ENCODE measurements at regions of chr6 and their contacts with region 1.

Region 1: DNA sequence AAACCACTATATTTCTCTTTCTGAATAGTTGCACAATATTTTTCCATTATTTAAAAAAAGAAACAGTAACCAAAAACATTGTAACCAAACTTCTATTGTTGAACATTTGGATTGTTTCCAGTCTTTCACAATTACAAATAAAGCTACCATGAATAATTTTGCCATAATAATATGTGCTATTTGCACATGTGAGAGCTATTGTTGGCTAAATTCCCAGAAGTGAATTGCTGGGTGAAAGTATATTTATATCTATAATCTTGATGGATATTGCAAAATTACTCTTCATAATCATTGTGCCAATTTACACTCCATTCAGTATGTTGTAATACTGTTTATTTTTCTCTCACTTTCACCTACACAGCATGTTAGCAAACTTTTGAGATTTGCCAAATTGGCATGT is 36.6 kb upstream of the SLC22A16 start:
- DNase-seq: peak in 1 of 2 experiments; percentile 79
- H3K4me3 ChIP-seq: no peak overlapping the region
- H3K27ac ChIP-seq: no peak overlapping the region
- H3K4me1 ChIP-seq: peaks cover 42% of the 10 kb centered on the region
- H3K27me3 ChIP-seq: no peaks in the 10 kb centered on the region
- CTCF ChIP-seq: no peak

Region 2: DNA sequence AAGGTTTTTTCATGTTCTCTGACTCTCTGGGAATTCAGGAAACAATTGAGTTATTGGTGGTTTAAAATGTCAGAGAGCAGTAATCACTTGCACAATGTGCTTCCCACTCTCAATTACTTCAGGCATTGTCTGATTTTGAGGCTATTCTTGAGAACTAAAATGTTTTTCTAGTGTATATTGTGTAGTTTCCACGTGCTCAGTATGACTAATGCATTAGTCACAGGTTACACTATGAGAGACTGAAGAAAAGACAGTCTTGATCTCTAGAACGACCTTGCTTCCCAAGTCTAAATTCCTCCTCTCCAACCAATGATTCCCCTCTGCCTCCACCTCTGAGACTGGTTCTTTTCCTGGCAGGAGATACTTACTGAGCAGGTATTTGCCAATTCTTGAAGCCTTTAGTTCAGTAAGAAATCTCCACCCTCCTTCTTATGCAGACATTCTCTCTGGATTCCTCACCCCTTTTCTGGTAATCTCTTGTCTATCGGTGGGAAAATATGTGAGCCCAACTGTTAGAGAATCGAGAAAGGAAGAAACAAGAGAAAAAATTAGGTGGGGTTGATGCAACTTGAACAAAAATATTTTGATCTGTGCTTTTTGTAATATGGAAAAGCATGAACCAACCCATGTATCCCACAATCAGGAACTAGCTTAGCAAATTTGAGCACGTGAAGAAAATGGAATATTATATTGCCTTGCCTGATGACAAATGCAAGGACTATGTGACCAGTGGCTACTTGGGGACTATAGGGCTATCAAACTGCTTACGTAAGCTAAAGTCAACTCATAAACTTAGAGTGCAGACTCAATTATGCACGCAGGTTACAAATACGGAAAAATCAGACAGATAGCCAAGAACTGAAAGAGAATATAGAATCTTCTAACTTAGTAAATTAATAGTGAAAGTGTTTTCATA is 24.5 kb after region 1 on chr6:
- CTCF ChIA-PET with region 1: interaction called, 10 read pairs
- POLR2A ChIA-PET with region 1: no interaction called
- intact Hi-C with region 1: no loop called
- DNase-seq: peak; percentile 47 to 97
- H3K4me3 ChIP-seq: no peak overlapping the region
- H3K27ac ChIP-seq: peak overlapping the region; percentile 92
- H3K4me1 ChIP-seq: peaks cover 30% of the 10 kb centered on the region
- H3K27me3 ChIP-seq: no peaks in the 10 kb centered on the region
- CTCF ChIP-seq: no peak

Measured in PC-9 (cell line).